ENCODE measurements at regions of chr10 and their contacts with region 1.

Region 1: GRCh38 chr10:87861953-87862678 is 1.2 kb downstream of the KLLN start:
- DNase-seq: peak; percentile 92 to 96 (median 94)
- H3K4me3 ChIP-seq: peak overlapping the region; percentile 91 to 95
- H3K4me3 Mint-ChIP-seq: peak overlapping the region; percentile 95 to 99 (median 97)
- H3K27ac ChIP-seq: peak overlapping the region; percentile 69
- H3K27ac Mint-ChIP-seq: peak overlapping the region; percentile 93 to 99 (median 96)
- H3K4me1 ChIP-seq: peaks cover 35% of the 10 kb centered on the region
- H3K4me1 Mint-ChIP-seq: peaks cover 25 to 60% (median 32%) of the 10 kb centered on the region in 4 donors
- H3K27me3 ChIP-seq: no peaks in the 10 kb centered on the region
- H3K27me3 Mint-ChIP-seq: peaks cover 0 to 3% of the 10 kb centered on the region in 2 donors

Region 2: DNA sequence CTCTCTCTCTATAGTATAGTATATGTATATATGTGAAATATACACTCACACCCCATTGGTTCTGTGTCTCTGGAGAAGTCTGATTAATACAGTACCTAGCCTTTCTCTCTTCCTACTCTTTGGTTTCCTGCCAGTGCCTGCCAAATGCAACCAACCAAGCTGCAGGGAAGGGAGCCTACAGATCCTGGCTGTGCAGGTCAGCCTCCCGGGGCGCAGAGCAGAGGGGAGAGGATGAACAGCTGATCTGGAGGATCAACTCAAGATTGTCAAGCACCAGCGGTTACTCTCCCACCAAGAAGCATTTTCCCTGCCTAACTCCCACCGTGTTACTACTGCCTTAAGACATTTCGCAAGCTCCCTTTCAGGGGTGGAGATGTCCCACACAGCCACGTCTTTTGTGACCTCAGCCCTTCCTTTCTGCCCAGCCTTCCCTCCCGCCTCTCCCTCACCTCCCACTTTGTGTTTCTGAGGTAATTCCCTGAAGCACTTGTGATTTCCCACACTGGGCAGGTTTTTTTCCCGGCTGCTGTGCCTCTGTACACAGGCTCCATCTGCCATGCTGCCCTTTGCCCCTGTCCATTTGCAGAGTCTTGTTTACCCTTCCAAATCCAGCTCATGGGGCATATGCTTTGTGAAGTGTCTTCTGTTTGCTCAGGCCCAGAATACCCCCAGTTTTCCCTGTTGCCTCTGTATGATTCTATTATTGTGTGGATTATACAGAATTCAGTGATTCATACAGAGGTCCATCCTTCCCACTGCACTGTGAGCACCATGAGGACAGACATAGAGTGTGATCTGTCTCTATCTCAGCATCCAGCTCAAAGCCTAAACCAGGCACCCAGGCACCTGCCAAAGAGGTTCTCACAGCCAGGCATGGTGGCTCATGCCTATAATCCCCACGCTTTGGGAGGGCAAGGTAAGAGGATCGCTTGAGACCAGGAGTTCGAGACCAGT is 243.4 kb before region 1 on chr10:
- CTCF ChIA-PET with region 1: no interaction called
- POLR2A ChIA-PET with region 1: no interaction called
- intact Hi-C with region 1: no loop called
- DNase-seq: no peak
- H3K4me3 ChIP-seq: no peak overlapping the region
- H3K4me3 Mint-ChIP-seq: no peak overlapping the region
- H3K27ac ChIP-seq: no peak overlapping the region
- H3K27ac Mint-ChIP-seq: no peak overlapping the region
- H3K4me1 ChIP-seq: no peaks in the 10 kb centered on the region
- H3K4me1 Mint-ChIP-seq: no peaks in the 10 kb centered on the region
- H3K27me3 ChIP-seq: no peaks in the 10 kb centered on the region
- H3K27me3 Mint-ChIP-seq: peaks cover 10 to 27% of the 10 kb centered on the region in 2 donors

Region 3: DNA sequence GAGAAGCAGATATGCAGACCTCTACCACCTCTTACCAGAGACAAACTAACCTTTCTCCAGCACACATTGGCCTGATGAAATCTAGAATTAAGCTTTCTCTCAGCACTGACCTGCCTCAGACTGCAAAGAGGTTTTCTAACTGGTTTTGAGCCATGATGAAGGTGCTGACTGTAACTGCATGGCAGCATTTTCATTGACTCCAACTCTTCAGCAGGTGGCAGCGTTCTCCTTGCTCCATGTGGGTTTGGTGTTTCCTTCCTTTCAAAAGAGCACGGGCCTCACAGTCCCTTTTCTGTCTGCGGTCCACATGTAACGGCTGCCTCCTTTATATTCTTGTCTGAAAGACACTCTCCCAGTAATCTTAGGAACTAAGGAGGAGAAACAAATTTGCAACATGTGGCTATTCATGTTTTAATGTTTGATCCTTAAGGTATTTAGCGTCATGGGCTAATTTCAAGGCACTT is 11.3 kb before region 1 on chr10:
- CTCF ChIA-PET with region 1: interaction called, 20 read pairs
- POLR2A ChIA-PET with region 1: interaction called, 22 read pairs
- intact Hi-C with region 1: no loop called
- DNase-seq: peak; percentile 38 to 59 (median 52)
- H3K4me3 ChIP-seq: no peak overlapping the region
- H3K4me3 Mint-ChIP-seq: no peak overlapping the region
- H3K27ac ChIP-seq: no peak overlapping the region
- H3K27ac Mint-ChIP-seq: no peak overlapping the region
- H3K4me1 ChIP-seq: peaks cover 6% of the 10 kb centered on the region
- H3K4me1 Mint-ChIP-seq: peaks cover 8 to 14% (median 9%) of the 10 kb centered on the region in 4 donors
- H3K27me3 ChIP-seq: no peaks in the 10 kb centered on the region
- H3K27me3 Mint-ChIP-seq: no peaks in the 10 kb centered on the region

Region 4: DNA sequence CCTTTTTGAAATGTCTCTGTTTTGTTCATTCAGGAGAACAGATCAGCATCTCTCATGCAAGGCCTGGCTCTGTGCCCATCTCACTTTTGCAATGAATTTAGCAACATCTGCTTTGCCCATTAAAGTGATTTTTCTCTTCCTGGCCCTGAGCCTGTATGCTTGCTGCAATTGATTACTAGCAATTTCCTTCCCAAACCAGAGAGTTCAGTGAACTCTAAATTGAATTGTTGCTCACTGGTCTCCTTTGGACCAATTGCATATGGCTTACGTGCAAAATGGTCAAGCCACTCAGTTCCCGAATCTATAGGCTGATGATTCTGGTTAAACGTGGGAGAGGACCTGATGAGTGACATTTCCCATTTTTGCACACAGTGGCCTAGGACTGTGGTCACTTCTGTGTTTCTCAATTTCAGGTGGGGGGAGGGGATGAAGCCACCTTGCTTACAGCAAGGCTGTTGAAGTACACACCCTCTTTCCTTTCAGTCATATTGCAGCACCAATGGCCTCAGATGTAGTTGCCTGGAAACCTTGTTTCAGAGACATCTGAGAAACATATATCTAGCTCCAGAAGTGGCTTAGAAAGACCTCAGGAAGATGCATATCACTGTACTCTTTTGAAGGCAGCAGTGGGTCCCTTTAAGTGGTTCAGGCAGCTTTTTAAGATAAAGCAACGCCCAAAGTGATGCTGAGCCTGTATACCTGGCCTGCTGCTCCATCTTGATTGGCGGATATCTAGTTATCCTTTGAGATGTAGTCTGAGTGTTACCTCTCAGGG is 202.7 kb after region 1 on chr10:
- CTCF ChIA-PET with region 1: no interaction called
- POLR2A ChIA-PET with region 1: interaction called, 16 read pairs
- intact Hi-C with region 1: no loop called
- DNase-seq: peak; percentile 47 to 81 (median 76)
- H3K4me3 ChIP-seq: no peak overlapping the region
- H3K4me3 Mint-ChIP-seq: peak overlapping the region in 7 of 8 donors; percentile 32 to 81 (median 59)
- H3K27ac ChIP-seq: no peak overlapping the region
- H3K27ac Mint-ChIP-seq: peak overlapping the region; percentile 84 to 97 (median 95)
- H3K4me1 ChIP-seq: peaks cover 43% of the 10 kb centered on the region
- H3K4me1 Mint-ChIP-seq: peaks cover 45 to 72% (median 50%) of the 10 kb centered on the region in 4 donors
- H3K27me3 ChIP-seq: no peaks in the 10 kb centered on the region
- H3K27me3 Mint-ChIP-seq: no peaks in the 10 kb centered on the region

Region 5: GRCh38 chr10:88270871-88271713 is 409.0 kb after region 1 on chr10:
- CTCF ChIA-PET with region 1: interaction called, 4 read pairs
- POLR2A ChIA-PET with region 1: interaction called, 10 read pairs
- intact Hi-C with region 1: loop called (anchors 1 kb)
- DNase-seq: peak; percentile 66 to 79 (median 71)
- H3K4me3 ChIP-seq: peak overlapping the region; percentile 3 to 6
- H3K4me3 Mint-ChIP-seq: peak overlapping the region; percentile 76 to 81 (median 78)
- H3K27ac ChIP-seq: peak overlapping the region; percentile 32
- H3K27ac Mint-ChIP-seq: peak overlapping the region; percentile 87 to 93 (median 92)
- H3K4me1 ChIP-seq: peaks cover 57% of the 10 kb centered on the region
- H3K4me1 Mint-ChIP-seq: peaks cover 33 to 54% (median 43%) of the 10 kb centered on the region in 4 donors
- H3K27me3 ChIP-seq: no peaks in the 10 kb centered on the region
- H3K27me3 Mint-ChIP-seq: no peaks in the 10 kb centered on the region

Region 6: DNA sequence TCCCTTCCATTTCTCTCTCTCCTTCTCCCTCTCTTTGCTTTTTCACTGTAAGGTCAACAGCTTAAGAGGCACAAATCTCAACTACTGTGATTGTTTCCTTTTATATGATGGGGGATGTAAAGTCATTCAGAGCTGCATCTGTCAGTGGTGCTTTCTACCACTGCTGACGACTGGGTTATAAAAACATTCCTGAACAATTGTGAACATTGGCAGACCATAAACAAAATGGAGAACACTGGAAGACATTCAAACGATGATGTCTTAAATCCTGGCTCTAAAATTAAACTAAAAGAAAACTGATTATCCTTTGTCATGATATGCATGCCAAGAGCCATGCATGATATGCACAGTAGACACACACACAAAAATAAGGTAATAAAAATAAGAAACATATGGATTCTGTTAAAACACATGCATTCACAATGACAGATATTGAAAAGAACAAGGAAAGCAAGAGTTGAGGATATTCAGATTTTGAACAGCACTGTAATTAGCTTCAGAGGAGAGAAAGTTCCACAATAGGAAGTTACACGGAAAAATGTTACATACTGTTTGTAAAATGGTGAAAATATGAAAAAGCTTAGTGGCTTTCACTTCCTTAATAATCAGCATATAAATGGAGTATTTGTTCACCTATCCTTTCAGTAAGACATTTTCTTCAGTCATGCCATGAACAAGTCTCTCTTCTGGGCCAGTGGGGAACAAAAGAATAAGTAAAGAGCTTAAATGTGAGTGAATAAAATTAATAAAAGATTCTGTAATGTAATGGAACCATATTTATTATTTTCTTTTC is 631.8 kb after region 1 on chr10:
- CTCF ChIA-PET with region 1: no interaction called
- POLR2A ChIA-PET with region 1: no interaction called
- intact Hi-C with region 1: no loop called
- DNase-seq: no peak
- H3K4me3 ChIP-seq: no peak overlapping the region
- H3K4me3 Mint-ChIP-seq: no peak overlapping the region
- H3K27ac ChIP-seq: no peak overlapping the region
- H3K27ac Mint-ChIP-seq: no peak overlapping the region
- H3K4me1 ChIP-seq: peaks cover 7% of the 10 kb centered on the region
- H3K4me1 Mint-ChIP-seq: peaks cover 3 to 23% (median 8%) of the 10 kb centered on the region in 4 donors
- H3K27me3 ChIP-seq: no peaks in the 10 kb centered on the region
- H3K27me3 Mint-ChIP-seq: no peaks in the 10 kb centered on the region

Region 7: DNA sequence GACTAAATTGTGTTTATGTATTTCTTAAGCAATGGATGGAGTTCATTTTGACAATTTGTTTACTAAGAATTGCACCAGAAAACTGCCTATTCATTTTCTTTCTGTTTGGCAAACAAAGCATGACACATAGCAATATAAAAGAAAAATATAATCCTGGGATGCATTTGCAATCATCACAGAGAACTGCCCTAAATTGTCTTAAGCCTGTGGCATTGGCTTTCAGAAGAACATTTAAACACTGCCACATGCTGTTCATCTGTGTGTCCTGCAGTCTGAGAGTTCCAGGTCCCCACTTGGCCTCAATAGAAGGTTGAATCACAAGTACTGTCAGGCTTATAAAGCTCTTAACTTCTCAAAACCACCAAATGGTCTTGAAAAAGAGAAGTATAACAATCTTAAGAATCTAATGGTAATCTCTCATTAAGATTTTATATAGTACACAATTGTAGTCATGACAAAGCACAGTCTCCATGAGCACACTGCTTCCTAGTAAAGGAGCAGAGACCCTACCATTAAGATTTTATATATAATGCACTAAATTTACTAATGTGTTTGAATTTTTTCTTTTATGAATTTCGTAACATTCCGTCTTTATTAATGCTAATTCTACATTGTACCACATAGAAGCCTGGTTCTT is 691.1 kb after region 1 on chr10:
- CTCF ChIA-PET with region 1: interaction called, 21 read pairs
- POLR2A ChIA-PET with region 1: no interaction called
- intact Hi-C with region 1: loop called (anchors 1 kb)
- DNase-seq: peak; percentile 43 to 52 (median 49)
- H3K4me3 ChIP-seq: no peak overlapping the region
- H3K4me3 Mint-ChIP-seq: no peak overlapping the region
- H3K27ac ChIP-seq: no peak overlapping the region
- H3K27ac Mint-ChIP-seq: no peak overlapping the region
- H3K4me1 ChIP-seq: no peaks in the 10 kb centered on the region
- H3K4me1 Mint-ChIP-seq: no peaks in the 10 kb centered on the region
- H3K27me3 ChIP-seq: no peaks in the 10 kb centered on the region
- H3K27me3 Mint-ChIP-seq: no peaks in the 10 kb centered on the region

Region 8: DNA sequence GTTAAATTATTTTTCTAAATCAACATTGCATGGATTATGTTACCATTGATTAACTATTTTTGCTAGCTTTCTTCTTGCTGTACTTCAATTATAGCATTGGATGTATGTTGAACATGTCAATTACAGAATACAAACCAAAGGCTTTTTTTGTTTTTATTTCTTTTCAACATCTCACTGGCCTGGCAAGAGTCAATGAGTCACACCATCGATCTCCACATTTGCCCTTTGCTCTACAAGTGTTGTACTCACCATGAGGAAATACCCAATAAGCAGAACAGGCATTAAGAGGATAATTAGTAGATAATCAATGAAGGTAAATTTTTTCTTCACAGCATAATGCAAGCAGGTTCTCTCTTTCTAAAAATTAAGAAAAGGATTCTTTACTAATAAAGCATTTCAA is 966.2 kb after region 1 on chr10:
- CTCF ChIA-PET with region 1: interaction called, 3 read pairs
- POLR2A ChIA-PET with region 1: interaction called, 4 read pairs
- intact Hi-C with region 1: loop called (anchors 5 kb)
- DNase-seq: no peak
- H3K4me3 ChIP-seq: no peak overlapping the region
- H3K4me3 Mint-ChIP-seq: no peak overlapping the region
- H3K27ac ChIP-seq: no peak overlapping the region
- H3K27ac Mint-ChIP-seq: no peak overlapping the region
- H3K4me1 ChIP-seq: peaks cover 67% of the 10 kb centered on the region
- H3K4me1 Mint-ChIP-seq: peaks cover 46 to 80% (median 67%) of the 10 kb centered on the region in 4 donors
- H3K27me3 ChIP-seq: no peaks in the 10 kb centered on the region
- H3K27me3 Mint-ChIP-seq: no peaks in the 10 kb centered on the region